ENCODE measurements at regions of chr12 and their contacts with region 1.

Region 1: GRCh38 chr12:1690578-1691122 is at the start of gene ADIPOR2:
- DNase-seq: peak; percentile 91 to 96 (median 95)
- ATAC-seq: peak; percentile 99
- H3K4me3 ChIP-seq: peak within 1 kb of the TSS; percentile 76
- H3K4me3 Mint-ChIP-seq: peak within 1 kb of the TSS; percentile 94 to 99 (median 98)
- H3K27ac ChIP-seq: peak within 1 kb of the TSS; percentile 91
- H3K27ac Mint-ChIP-seq: peak within 1 kb of the TSS; percentile 96 to 100 (median 98)
- H3K4me1 ChIP-seq: peaks cover 7 to 9% of the 10 kb centered on the region in 2 donors
- H3K4me1 Mint-ChIP-seq: peaks cover 26 to 59% (median 52%) of the 10 kb centered on the region in 7 donors
- H3K27me3 ChIP-seq: no peaks in the 10 kb centered on the region
- H3K27me3 Mint-ChIP-seq: peaks cover 0 to 13% (median 0%) of the 10 kb centered on the region in 5 donors
- total RNA-seq, gene ADIPOR2: 19.8 to 51.4 (median 36.4) TPM

Region 2: GRCh38 chr12:389139-390096 is 1301.2 kb before region 1 on chr12 and contains the start of gene KDM5A:
- CTCF ChIA-PET with region 1: no interaction called
- POLR2A ChIA-PET with region 1: no interaction called
- intact Hi-C with region 1: loop called (anchors 2 to 5 kb)
- DNase-seq: peak; percentile 82 to 97 (median 94)
- ATAC-seq: peak; percentile 97
- H3K4me3 ChIP-seq: peak within 1 kb of the TSS; percentile 96
- H3K4me3 Mint-ChIP-seq: peak within 1 kb of the TSS; percentile 91 to 100 (median 97)
- H3K27ac ChIP-seq: peak within 1 kb of the TSS; percentile 91
- H3K27ac Mint-ChIP-seq: peak within 1 kb of the TSS; percentile 95 to 100 (median 99)
- H3K4me1 ChIP-seq: peaks cover 31% of the 10 kb centered on the region in 2 donors
- H3K4me1 Mint-ChIP-seq: peaks cover 28 to 55% (median 39%) of the 10 kb centered on the region in 7 donors
- H3K27me3 ChIP-seq: no peaks in the 10 kb centered on the region
- H3K27me3 Mint-ChIP-seq: peaks cover 0 to 3% (median 0%) of the 10 kb centered on the region in 5 donors
- total RNA-seq, gene KDM5A: 110 to 138 (median 124) TPM

Region 3: DNA sequence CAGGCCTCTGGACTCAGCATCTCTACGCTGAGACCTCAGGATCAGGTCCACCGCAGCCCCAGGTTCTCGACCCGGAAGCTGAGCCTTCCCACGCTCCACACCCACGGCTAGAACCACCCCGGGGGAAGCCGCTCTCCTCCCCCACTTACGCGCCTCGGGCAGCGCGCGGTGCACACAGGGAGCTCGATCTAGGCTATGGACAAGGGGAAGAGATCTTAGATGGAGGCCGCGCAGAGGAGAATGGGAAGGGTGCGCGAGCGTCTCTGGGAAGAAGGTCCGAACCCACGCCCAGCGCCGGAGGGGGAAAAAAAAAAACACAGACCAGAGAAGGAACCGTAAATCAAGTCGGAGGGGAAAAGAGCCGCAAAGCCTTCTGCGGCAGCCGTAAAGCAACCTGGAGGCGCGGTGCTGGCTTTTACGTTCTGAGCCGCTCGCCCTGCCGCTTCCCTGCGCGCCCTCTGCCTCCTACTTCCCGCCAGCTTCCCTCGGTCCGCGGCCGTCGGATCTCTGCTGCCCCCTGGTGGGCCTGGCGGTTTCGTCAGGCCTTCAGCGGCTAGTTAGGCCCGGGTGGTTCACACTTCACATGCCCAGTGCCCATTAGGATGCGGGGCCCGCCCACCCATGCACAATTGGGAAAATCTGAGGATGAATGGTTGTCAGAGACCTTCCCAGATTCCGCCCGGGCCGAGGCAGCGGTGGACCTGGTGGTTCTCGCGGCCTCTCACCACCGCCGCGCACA is 741.0 kb before region 1 on chr12 and contains the start of gene RAD52:
- CTCF ChIA-PET with region 1: no interaction called
- POLR2A ChIA-PET with region 1: no interaction called
- intact Hi-C with region 1: loop called in 1 of 2 experiments (anchors 5 kb)
- DNase-seq: peak; percentile 94 to 99 (median 97)
- ATAC-seq: peak; percentile 96
- H3K4me3 ChIP-seq: peak within 1 kb of the TSS; percentile 83
- H3K4me3 Mint-ChIP-seq: peak within 1 kb of the TSS; percentile 90 to 98 (median 94)
- H3K27ac ChIP-seq: peak within 1 kb of the TSS; percentile 78
- H3K27ac Mint-ChIP-seq: peak within 1 kb of the TSS; percentile 88 to 98 (median 93)
- H3K4me1 ChIP-seq: peaks cover 0 to 3% of the 10 kb centered on the region in 2 donors
- H3K4me1 Mint-ChIP-seq: peaks cover 20 to 34% (median 30%) of the 10 kb centered on the region in 7 donors
- H3K27me3 ChIP-seq: no peaks in the 10 kb centered on the region
- H3K27me3 Mint-ChIP-seq: peaks cover 0 to 4% (median 0%) of the 10 kb centered on the region in 5 donors
- total RNA-seq, gene RAD52: 11.0 to 34.9 (median 18.3) TPM

Region 4: DNA sequence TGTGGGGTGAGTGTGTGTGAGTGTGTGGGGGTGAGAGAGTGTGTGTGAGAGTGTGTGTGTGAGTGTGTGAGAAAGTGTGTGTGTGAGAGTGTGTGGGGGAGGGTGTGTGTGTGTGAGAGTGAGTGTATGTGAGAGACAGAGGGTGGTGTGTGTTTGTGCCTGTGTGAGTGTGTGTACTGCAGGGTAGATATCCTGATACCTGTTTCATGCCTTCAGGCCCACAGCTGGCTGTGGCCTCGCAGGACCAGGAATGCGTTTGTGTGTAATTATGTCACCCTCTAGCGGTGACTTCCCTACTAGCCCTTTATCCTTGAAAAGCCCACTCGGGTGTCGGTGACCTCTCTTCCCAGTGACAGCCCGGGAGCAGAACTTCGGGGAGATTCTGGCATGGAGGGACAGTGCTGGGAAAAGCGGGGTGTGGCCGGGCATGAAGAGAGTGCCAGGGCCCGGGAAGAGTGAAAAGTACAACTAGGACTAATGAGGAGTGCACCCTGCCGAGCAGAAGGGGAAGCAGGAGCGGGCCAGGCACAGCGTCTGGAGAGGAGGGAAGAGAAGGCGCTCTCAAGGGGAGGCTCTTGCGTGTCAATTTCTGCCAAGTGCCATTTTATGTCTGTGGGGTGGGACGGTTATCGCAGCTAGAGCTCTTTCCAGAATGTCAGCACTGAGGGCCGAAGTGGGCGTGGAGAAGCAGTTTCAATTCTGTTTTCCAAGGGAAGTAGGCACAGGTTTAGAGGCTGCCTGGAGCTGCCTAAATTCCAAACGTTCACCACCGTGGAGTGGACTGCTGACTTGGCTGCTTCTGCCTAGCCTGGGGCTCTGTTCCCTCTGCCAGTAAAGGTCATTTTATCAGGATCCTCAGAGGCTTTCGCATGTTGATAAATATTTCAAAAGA is 85.3 kb before region 1 on chr12:
- CTCF ChIA-PET with region 1: no interaction called
- POLR2A ChIA-PET with region 1: no interaction called
- intact Hi-C with region 1: loop called in 1 of 2 experiments (anchors 1 kb)
- DNase-seq: peak; percentile 32 to 76 (median 68)
- ATAC-seq: peak; percentile 83
- H3K4me3 ChIP-seq: peak overlapping the region; percentile 55
- H3K4me3 Mint-ChIP-seq: peak overlapping the region; percentile 80 to 94 (median 86)
- H3K27ac ChIP-seq: no peak overlapping the region
- H3K27ac Mint-ChIP-seq: peak overlapping the region in 8 of 9 donors; percentile 27 to 87 (median 56)
- H3K4me1 ChIP-seq: peaks cover 13 to 15% of the 10 kb centered on the region in 2 donors
- H3K4me1 Mint-ChIP-seq: peaks cover 20 to 44% (median 38%) of the 10 kb centered on the region in 7 donors
- H3K27me3 ChIP-seq: no peaks in the 10 kb centered on the region
- H3K27me3 Mint-ChIP-seq: peaks cover 0 to 8% (median 0%) of the 10 kb centered on the region in 5 donors

Region 5: DNA sequence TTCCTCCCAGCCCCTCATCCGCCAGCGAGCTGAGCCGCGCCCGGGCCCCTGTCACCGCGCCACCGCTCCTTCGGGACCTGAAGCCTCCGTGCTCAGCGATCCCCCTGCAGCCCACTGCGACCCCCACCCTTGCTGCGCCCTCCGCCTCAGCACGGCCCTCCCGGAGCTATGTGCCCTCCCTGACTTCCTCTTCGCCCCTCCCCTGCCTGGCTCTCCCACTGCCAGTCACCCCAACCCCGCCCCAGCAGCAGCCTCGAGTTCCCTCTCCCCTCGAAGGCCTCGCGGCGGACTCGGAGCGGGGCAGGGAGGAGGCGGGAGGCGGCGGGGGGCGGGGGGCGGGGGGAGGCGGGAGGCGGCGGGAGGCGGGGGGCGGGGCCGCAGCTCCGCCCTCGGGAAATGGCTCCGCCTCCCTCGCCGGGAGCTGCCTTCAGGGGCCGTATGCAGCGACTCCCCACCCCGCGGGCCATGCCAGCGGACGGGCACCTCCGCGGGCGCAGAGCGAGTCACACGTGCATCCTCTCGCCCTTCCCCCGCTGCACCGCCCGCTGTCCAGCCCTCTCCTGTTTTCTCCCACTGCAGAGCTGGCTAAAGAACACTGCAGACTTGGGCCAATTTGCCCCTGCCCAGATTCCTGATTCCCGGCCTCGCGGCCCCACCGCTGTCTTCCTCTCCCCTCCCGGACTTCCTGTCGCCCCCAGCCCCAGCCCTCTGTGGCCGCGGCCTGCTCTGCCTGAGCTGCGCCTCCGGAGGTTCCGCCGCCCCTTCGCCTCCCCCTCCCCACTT is 28.9 kb before region 1 on chr12:
- CTCF ChIA-PET with region 1: interaction called, 4 read pairs
- POLR2A ChIA-PET with region 1: interaction called, 16 read pairs
- intact Hi-C with region 1: loop called (anchors 1 kb)
- DNase-seq: peak; percentile 74 to 84 (median 82)
- ATAC-seq: peak; percentile 93
- H3K4me3 ChIP-seq: peak overlapping the region; percentile 64
- H3K4me3 Mint-ChIP-seq: peak overlapping the region; percentile 70 to 86 (median 78)
- H3K27ac ChIP-seq: peak overlapping the region; percentile 66
- H3K27ac Mint-ChIP-seq: peak overlapping the region in 8 of 9 donors; percentile 62 to 87 (median 82)
- H3K4me1 ChIP-seq: peaks cover 5 to 7% of the 10 kb centered on the region in 2 donors
- H3K4me1 Mint-ChIP-seq: peaks cover 14 to 37% (median 31%) of the 10 kb centered on the region in 7 donors
- H3K27me3 ChIP-seq: no peaks in the 10 kb centered on the region
- H3K27me3 Mint-ChIP-seq: peaks cover 0 to 2% (median 0%) of the 10 kb centered on the region in 5 donors

Region 6: GRCh38 chr12:1732914-1733313 is 42.3 kb after region 1 on chr12:
- CTCF ChIA-PET with region 1: no interaction called
- POLR2A ChIA-PET with region 1: no interaction called
- intact Hi-C with region 1: loop called in 1 of 2 experiments (anchors 5 kb)
- DNase-seq: peak in 4 of 9 donors; percentile 2 to 30 (median 18)
- ATAC-seq: no peak
- H3K4me3 ChIP-seq: no peak overlapping the region
- H3K4me3 Mint-ChIP-seq: peak overlapping the region in 4 of 10 donors; percentile 39 to 61 (median 48)
- H3K27ac ChIP-seq: no peak overlapping the region
- H3K27ac Mint-ChIP-seq: peak overlapping the region in 3 of 9 donors; percentile 23 to 65 (median 44)
- H3K4me1 ChIP-seq: peaks cover 4 to 5% of the 10 kb centered on the region in 2 donors
- H3K4me1 Mint-ChIP-seq: peaks cover 12 to 61% (median 44%) of the 10 kb centered on the region in 7 donors
- H3K27me3 ChIP-seq: no peaks in the 10 kb centered on the region
- H3K27me3 Mint-ChIP-seq: no peaks in the 10 kb centered on the region

Region 7: DNA sequence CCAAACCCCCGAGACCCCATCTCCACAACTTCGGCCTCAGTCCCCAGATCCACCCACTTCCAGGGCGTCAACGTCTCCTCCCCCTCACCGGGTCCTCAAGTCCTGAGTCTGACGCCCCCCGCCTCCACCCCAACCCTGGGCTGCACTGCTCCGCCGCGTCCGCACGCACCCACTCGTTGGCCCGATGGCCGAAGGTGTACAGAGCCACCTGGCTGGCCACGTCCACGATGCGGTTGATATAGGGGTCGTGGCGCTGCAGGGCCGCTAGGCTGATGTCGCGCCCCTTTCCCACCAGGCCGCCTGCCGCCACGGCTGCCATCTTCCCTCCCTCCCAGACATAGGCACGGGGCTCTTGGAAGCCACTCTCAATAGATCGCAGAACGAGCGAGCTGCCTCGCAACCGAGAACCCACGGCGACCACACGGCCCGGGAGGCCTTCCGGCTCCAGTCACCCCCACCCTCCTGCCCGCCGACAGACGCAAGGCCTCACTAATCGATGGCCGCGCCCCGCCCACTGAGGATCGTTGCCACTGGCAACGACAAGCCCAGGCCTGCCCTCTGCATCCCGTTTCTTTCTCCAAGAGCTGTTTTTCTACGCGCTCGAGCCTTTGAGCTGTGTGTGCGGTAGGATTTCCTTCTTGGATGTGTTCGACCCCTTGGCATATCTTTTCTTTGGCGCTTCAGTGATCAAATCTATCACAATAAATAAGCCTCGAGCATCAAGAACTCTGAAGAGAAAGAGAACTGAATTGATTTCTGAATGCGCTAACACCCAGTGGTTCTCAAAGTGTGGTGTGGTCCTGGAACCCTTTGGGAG is 313.7 kb after region 1 on chr12 and contains the start of gene DCP1B:
- CTCF ChIA-PET with region 1: no interaction called
- POLR2A ChIA-PET with region 1: interaction called, 3 read pairs
- intact Hi-C with region 1: loop called (anchors 1 kb)
- DNase-seq: peak; percentile 76 to 93 (median 90)
- ATAC-seq: peak; percentile 99
- H3K4me3 ChIP-seq: peak within 1 kb of the TSS; percentile 80
- H3K4me3 Mint-ChIP-seq: peak within 1 kb of the TSS; percentile 92 to 100 (median 97)
- H3K27ac ChIP-seq: peak within 1 kb of the TSS; percentile 80
- H3K27ac Mint-ChIP-seq: peak within 1 kb of the TSS; percentile 93 to 99 (median 97)
- H3K4me1 ChIP-seq: peaks cover 10 to 18% of the 10 kb centered on the region in 2 donors
- H3K4me1 Mint-ChIP-seq: peaks cover 15 to 44% (median 36%) of the 10 kb centered on the region in 7 donors
- H3K27me3 ChIP-seq: no peaks in the 10 kb centered on the region
- H3K27me3 Mint-ChIP-seq: peaks cover 0 to 6% (median 0%) of the 10 kb centered on the region in 5 donors
- total RNA-seq, gene DCP1B: 8.1 to 19.7 (median 15.5) TPM

Measured in naive thymus-derived CD4-positive, alpha-beta T cell (primary cell).